Ascending aorta (tissue), 2 donors: ENCODE measurements at regions of chr19 and their contacts with region 1.

Region 1: DNA sequence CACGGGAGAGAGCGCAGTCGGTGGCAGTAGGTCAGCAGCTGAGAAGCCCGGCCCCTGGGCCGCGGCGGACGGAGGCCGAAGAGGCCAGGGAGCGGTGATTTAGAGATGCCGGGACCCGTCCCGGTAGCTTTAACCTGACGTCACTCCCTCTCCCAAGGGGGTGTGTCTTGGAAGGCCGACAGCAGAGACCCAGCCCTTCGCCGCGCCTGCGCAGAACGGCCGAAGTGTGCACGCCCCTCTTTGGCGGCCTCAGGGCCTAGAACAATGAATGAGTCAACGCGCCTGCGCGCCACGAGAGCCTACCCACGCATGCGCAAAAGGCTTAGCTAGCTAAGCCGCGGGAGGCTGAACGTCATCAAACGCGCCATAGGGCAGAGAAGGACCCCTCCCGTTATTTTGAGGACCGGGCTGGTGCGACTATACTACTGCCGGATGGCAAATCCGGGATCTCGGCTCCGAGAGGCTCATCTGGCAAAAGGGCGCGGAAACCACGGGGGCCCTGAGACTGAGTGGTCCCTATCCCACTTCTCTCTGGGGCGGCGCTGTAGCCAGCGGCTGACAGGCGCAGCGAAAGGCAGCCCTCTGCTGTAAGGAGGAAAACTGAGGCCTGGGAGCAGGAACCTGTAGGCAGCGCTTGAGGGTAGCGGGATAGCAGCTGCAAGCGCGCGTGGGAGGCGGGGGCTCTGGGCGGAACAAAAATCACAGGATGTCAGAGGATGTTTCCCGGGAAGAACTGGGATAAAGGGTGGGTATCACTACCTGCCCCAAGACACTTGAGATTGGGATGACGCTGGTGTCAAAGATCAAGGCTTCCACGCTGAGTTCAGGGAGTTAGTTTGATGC is at the starts of genes IRGQ and ZNF576:
- DNase-seq: peak; percentile 99 to 100
- H3K4me3 ChIP-seq: peak within 1 kb of the TSS; percentile 59 to 88
- H3K27ac ChIP-seq: peak within 1 kb of the TSS; percentile 94 to 99
- H3K4me1 ChIP-seq: peaks cover 22 to 23% of the 10 kb centered on the region in 2 donors
- H3K27me3 ChIP-seq: no peaks in the 10 kb centered on the region
- CTCF ChIP-seq: no peak
- total RNA-seq, gene IRGQ: 17.2 TPM
- total RNA-seq, gene ZNF576: 3.1 TPM

Region 2: DNA sequence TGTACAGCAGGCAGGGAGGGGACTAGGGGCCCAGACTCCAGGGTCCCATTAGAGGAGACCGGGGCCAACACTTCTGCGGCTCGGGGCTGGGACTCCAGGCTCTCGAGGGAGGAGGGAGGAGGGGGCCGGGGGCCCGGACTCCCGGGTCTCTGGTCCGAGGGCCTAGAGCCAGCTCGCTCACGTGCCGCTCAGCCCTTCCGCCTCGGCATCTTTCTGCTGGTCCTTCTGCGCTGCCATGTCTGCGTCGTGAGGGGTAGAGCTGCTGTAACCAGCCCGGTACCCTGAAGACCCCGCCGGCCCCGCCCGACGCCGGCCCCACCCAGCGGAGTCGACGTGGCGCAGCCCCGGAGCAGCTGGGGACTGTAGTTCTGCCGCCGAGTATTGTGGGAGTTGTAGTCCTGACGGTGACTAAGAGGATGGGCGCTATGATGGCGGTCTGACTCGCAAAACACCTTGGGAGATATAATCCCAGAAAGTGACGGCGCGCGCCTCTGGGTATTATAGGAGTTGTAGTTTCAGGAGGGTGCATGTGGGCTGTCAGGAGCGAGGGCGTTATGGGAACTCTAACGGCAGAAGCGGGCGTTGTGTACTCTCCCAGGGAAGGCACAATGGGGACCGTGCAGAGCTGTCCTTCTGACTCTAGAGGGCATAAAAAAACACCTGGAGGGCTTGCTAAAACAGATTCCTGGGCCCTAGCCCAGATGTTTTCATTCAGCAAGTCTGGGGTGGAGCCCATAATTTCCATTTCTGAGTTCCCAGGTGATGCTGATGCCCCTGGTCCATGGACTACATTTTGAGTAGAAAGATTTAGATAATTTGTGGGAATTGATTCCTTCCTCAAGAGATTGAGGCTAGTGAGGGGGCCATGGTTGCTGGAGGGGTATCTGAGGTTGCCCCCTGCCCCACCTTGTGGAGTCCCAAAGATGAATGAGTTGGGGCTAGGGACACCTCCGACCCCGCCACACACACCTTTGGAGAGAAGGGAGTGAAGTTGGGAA is 1636.9 kb before region 1 on chr19 and contains the start of gene RABAC1:
- intact Hi-C with region 1: loop called (anchors 10 kb)
- DNase-seq: peak; percentile 64 to 95
- H3K4me3 ChIP-seq: peak within 1 kb of the TSS; percentile 83 to 96
- H3K27ac ChIP-seq: peak within 1 kb of the TSS; percentile 92 to 93
- H3K4me1 ChIP-seq: peaks cover 3 to 9% of the 10 kb centered on the region in 2 donors
- H3K27me3 ChIP-seq: no peaks in the 10 kb centered on the region
- CTCF ChIP-seq: no peak
- total RNA-seq, gene RABAC1: 360 TPM

Region 3: GRCh38 chr19:43438291-43439096 is 157.7 kb before region 1 on chr19:
- intact Hi-C with region 1: no loop called
- DNase-seq: no peak
- H3K4me3 ChIP-seq: no peak overlapping the region
- H3K27ac ChIP-seq: no peak overlapping the region
- H3K4me1 ChIP-seq: no peaks in the 10 kb centered on the region
- H3K27me3 ChIP-seq: no peaks in the 10 kb centered on the region
- CTCF ChIP-seq: no peak

Region 4: GRCh38 chr19:43575156-43575950 is 20.9 kb before region 1 on chr19 and contains the starts of genes PINLYP and XRCC1:
- intact Hi-C with region 1: loop called (anchors 1 kb)
- DNase-seq: peak; percentile 93 to 98
- H3K4me3 ChIP-seq: peak within 1 kb of the TSS; percentile 76 to 87
- H3K27ac ChIP-seq: peak within 1 kb of the TSS; percentile 67 to 86
- H3K4me1 ChIP-seq: peaks cover 9 to 10% of the 10 kb centered on the region in 2 donors
- H3K27me3 ChIP-seq: no peaks in the 10 kb centered on the region
- CTCF ChIP-seq: no peak
- total RNA-seq, gene PINLYP: 2.2 TPM
- total RNA-seq, gene XRCC1: 6.4 TPM

Region 5: DNA sequence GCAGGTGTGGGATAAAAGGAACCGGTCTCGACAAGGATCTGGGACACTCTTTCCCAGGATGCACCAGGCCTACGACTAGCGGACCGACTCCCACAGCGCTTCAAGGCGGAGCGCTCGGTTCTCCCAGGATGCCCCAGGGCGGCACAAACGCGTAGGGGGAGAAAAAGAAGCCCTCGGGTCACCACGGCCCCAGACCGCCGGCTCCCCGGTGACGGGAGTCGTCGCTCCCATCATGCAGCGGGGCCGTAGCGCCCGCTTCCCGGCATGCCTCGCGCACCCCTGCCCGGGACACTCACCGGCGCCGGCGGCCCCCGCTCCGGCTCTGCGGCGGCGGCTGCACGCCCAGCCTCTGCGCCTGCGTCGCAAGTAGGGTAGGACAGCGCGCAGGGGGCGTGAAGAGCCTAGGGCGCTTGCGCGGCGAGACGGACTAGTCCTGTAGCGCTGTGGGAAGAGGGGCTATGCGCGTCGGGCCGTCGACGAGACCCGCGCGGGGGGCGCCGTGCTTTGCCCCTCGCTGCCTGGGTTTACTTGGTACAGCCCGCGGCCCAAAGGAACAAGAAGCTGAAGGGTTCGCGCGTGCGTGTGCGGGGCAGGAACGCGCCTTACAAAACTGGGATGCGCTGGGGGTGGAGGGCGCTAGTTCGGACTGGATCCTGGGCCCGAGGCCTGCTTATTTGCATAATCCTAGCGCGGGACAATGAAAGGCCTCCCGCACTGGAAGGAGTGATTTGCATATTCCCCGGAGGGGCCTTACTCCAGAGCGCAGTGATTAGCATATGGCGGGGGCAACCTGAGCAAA is 23.2 kb after region 1 on chr19 and contains the start of gene ZNF428:
- intact Hi-C with region 1: loop called (anchors 1 kb)
- DNase-seq: peak; percentile 50 to 92
- H3K4me3 ChIP-seq: peak within 1 kb of the TSS; percentile 69 to 75
- H3K27ac ChIP-seq: peak within 1 kb of the TSS; percentile 87 to 89
- H3K4me1 ChIP-seq: peaks cover 0 to 7% of the 10 kb centered on the region in 2 donors
- H3K27me3 ChIP-seq: no peaks in the 10 kb centered on the region
- CTCF ChIP-seq: no peak
- total RNA-seq, gene ZNF428: 37.3 TPM

Region 6: DNA sequence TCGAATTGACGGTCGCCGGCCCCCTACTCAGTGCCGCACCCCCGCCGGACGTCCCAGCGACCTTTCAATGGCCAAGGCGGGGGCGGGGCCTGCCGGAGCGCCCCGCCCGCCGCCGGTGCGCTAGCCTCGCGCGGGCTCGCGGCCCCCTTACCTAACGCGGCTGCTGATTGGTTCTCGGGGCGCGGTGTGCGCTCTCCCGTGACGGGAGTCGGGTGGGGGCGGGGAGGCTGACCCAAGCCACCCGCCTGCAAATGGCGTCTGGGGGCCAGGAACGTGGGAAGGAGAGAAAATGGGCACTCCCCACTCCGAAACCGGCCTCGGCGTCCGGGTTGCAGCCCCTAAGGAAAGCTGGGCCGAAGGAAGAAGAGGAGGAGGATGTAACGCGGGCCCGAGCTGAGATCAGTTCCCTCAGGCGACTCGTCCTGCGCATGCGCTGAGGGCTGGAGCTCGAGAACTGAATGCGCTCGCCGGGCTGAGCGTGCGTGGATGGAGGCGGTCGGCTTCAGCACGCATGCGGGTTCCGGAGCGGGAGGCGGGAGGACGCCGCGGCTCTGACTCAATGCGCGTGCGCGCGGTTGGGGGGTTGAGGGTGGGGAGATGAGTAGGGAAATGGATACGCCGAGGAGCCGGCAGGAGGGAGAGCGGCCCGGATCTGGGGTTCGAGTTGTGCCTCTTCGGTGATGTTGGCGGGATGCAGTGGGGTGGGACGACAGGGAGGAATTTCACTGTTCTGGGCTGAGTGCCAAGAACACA is 158.5 kb after region 1 on chr19 and contains the start of gene SMG9:
- intact Hi-C with region 1: loop called (anchors 1 kb)
- DNase-seq: peak; percentile 87 to 98
- H3K4me3 ChIP-seq: peak within 1 kb of the TSS; percentile 77 to 92
- H3K27ac ChIP-seq: peak within 1 kb of the TSS; percentile 99
- H3K4me1 ChIP-seq: peaks cover 3 to 26% of the 10 kb centered on the region in 2 donors
- H3K27me3 ChIP-seq: no peaks in the 10 kb centered on the region
- CTCF ChIP-seq: no peak
- total RNA-seq, gene SMG9: 126 TPM